Mammary epithelial cell (primary cell): ENCODE measurements at regions of chr18 and their contacts with region 1.

Region 1: GRCh38 chr18:60684843-60685513 is 312.4 kb upstream of the MC4R start:
- DNase-seq: peak; percentile 17
- H3K4me3 ChIP-seq: no peak overlapping the region
- H3K27ac ChIP-seq: no peak overlapping the region
- H3K4me1 ChIP-seq: peaks cover 6% of the 10 kb centered on the region
- H3K27me3 ChIP-seq: no peaks in the 10 kb centered on the region
- CTCF ChIP-seq: peak; percentile 62 to 73

Region 2: GRCh38 chr18:61085761-61086160 is 400.8 kb after region 1 on chr18:
- CTCF ChIA-PET with region 1: no interaction called
- dilution Hi-C with region 1: no loop called
- in situ Hi-C with region 1: no loop called
- intact Hi-C with region 1: loop called (anchors 10 kb)
- DNase-seq: no peak
- H3K4me3 ChIP-seq: no peak overlapping the region
- H3K27ac ChIP-seq: no peak overlapping the region
- H3K4me1 ChIP-seq: no peaks in the 10 kb centered on the region
- H3K27me3 ChIP-seq: no peaks in the 10 kb centered on the region
- CTCF ChIP-seq: peak in 1 of 2 donors; percentile 14

Region 3: DNA sequence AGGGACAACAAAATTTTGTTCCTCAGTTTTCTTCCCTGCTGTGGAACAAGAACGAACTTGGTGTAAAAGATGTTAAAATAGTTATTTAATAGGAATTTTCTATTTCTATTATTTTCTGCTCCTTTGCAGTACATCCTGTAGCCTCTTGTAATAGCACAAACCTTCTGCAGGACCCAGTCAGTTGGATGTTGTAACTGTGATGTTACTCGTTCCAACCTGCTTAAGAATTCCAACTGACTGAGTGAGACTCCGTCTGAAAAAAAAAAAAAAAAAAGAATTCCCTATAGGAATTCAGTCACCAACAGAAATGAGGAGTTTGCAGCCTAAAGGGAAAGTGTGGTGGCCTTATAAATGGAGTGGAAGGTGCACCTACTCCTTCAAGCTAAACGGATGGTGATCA is 601.9 kb after region 1 on chr18:
- CTCF ChIA-PET with region 1: no interaction called
- dilution Hi-C with region 1: no loop called
- in situ Hi-C with region 1: no loop called
- intact Hi-C with region 1: loop called (anchors 5 kb)
- DNase-seq: peak; percentile 45
- H3K4me3 ChIP-seq: no peak overlapping the region
- H3K27ac ChIP-seq: no peak overlapping the region
- H3K4me1 ChIP-seq: peaks cover 11% of the 10 kb centered on the region
- H3K27me3 ChIP-seq: no peaks in the 10 kb centered on the region
- CTCF ChIP-seq: peak in 1 of 2 donors; percentile 3

Region 4: DNA sequence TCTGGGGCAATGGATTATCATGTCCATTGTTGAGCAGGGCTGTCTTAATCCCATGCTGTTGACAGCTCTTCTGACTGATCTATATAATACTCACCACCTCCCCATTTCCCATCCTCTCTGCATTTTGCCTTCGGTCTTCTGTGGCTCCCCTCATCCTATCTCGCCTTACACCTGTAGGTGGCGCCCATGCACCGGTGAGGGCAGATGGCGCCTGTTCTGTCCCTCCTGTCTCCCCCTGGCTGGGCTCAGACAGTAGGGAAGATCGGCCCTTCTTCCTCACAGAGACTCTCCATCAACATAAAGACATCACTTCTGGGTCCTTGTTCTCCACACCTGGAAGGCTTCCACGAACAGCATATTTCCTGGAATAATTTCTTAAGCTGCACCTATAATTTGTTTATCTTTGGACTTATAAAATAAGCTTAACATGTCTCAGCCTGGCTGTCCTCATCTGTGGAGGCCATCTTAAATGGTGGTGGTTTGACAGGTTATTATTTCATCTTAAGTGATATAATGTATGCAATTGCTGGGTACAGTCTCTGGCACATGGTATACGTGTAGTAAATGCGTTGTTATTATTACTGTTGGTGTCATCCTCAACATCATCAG is 637.4 kb after region 1 on chr18:
- CTCF ChIA-PET with region 1: no interaction called
- dilution Hi-C with region 1: no loop called
- in situ Hi-C with region 1: no loop called
- intact Hi-C with region 1: loop called (anchors 5 kb)
- DNase-seq: peak; percentile 35
- H3K4me3 ChIP-seq: no peak overlapping the region
- H3K27ac ChIP-seq: no peak overlapping the region
- H3K4me1 ChIP-seq: no peaks in the 10 kb centered on the region
- H3K27me3 ChIP-seq: no peaks in the 10 kb centered on the region
- CTCF ChIP-seq: peak; percentile 87 to 97

Region 5: DNA sequence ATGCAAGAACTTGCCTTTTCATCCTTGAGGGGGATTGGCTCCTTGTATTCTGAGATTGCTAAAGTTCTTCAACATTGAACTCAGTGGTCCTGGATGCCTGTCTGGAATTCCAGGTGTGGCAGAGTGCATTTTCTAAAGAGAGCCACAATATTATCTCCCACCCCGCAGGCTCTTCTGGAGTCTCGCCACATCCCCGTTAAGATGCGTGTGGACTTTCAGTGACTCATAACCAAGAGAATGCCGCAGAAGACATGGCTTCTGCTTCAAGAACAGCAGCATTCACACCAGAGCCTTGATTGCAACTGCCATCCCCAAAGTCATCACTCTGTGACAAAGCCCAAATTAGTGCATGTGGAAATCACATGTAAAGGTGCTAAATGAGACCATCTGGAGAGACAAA is 791.0 kb after region 1 on chr18:
- CTCF ChIA-PET with region 1: no interaction called
- dilution Hi-C with region 1: no loop called
- in situ Hi-C with region 1: loop called in 1 of 2 experiments (anchors 25 kb)
- intact Hi-C with region 1: no loop called
- DNase-seq: no peak
- H3K4me3 ChIP-seq: no peak overlapping the region
- H3K27ac ChIP-seq: no peak overlapping the region
- H3K4me1 ChIP-seq: no peaks in the 10 kb centered on the region
- H3K27me3 ChIP-seq: peaks cover 14% of the 10 kb centered on the region
- CTCF ChIP-seq: no peak

Region 6: DNA sequence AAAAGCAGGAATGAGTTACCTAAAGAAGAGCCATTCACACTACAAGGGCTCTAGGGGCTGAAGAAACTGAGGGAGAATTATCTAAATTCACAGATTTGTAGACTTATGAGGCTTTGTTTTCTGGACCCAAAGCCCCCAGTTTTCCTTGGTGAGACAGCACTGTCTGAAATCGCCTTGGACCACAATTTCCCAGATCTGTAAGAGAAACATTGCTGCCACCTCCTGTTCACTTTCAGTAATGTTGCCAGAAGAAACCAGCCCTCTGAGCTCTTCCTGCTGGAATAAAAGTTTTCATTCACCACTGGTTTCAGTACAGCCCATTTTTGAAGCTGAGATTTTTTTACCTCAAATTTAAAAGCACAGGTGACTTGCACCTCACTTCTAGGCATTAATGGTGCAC is 817.5 kb after region 1 on chr18:
- CTCF ChIA-PET with region 1: no interaction called
- dilution Hi-C with region 1: no loop called
- in situ Hi-C with region 1: loop called (anchors 25 kb)
- intact Hi-C with region 1: loop called (anchors 1 kb)
- DNase-seq: peak; percentile 32
- H3K4me3 ChIP-seq: no peak overlapping the region
- H3K27ac ChIP-seq: no peak overlapping the region
- H3K4me1 ChIP-seq: no peaks in the 10 kb centered on the region
- H3K27me3 ChIP-seq: no peaks in the 10 kb centered on the region
- CTCF ChIP-seq: peak; percentile 64 to 79